ENCODE measurements at regions of chr1 and their contacts with region 1.

Region 1: GRCh38 chr1:10430216-10431069 is at the start of gene CENPS:
- DNase-seq: peak; percentile 97
- H3K4me3 Mint-ChIP-seq: peak within 1 kb of the TSS; percentile 95
- H3K27ac Mint-ChIP-seq: peak within 1 kb of the TSS; percentile 98
- H3K4me1 Mint-ChIP-seq: peaks cover 18% of the 10 kb centered on the region
- H3K27me3 Mint-ChIP-seq: no peaks in the 10 kb centered on the region
- total RNA-seq, gene CENPS: 18.8 and 25.1 TPM in 2 replicates

Region 2: DNA sequence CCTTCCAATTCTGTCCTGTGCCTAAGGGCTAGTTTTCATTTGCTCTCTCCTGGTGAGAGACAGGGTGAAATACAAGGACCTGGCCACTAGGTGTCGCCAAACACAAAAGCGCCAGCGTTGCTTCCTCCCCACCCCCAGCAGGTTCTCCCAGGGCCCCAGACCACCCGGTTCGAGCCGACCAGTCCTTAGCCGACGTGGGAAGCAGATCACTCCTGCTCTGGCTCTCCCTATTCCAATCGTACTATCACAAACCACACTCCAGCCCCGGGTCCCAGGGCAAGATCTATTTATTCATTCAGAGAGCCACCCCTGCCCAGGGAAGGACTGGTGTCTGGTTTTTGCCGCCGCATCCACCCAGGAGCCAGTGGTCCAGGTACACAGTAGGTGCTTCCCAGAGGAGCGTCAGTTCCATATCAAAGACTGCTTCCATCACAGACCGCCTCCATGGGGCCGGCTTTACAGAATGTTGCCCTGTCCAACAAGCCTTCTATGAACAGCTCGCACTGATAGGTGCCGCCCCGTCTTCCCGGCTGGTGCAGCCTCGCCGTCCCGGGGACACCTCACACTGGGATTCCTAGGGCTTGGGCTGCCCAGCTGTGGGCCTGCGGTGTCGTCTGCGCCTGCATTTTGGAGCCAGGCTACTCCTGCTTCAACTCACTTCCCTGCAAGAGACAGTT is 555.3 kb before region 1 on chr1:
- intact Hi-C with region 1: loop called (anchors 1 kb)
- DNase-seq: peak; percentile 91
- H3K4me3 Mint-ChIP-seq: no peak overlapping the region
- H3K27ac Mint-ChIP-seq: no peak overlapping the region
- H3K4me1 Mint-ChIP-seq: peaks cover 4% of the 10 kb centered on the region
- H3K27me3 Mint-ChIP-seq: no peaks in the 10 kb centered on the region

Region 3: DNA sequence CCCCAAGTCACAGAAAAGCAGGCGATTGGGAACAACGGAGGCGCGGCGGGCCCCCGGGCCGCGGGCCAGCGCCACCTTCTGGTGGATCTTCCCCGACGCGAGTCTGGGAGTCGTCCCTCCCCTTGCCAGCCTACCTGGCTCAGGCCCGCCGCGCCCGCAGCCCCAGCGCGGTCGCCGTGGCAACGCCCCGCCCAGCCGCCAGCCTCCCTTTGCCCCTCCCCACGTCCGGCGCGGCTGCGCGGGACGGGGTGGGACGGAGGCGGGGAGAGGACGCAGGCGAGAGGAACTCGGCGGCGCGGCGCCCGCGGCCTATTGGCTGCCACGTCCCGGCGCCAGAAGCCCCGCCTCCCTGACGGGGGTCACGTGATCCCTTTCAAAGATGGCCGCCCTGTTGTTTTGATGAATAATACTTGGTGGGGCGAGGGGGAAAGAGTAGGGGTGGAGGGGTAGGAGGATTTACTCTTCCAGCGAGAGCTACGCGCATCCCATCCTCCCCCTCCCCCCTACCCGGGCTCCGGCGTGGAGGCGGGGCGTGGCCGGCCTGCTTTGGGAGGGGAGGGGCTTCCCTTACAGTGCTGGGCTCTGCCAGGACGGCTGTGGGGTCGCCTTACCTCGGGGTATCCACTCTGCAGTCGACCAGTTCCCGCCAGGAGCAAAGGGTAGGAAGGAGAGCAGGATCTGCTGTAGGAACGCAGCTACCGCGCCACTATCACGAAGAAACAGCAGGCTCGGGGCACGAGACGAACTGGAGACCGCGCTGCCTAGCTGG is 397.7 kb before region 1 on chr1 and contains the start of gene UBE4B:
- intact Hi-C with region 1: loop called (anchors 1 kb)
- DNase-seq: peak; percentile 100
- H3K4me3 Mint-ChIP-seq: peak within 1 kb of the TSS; percentile 85
- H3K27ac Mint-ChIP-seq: peak within 1 kb of the TSS; percentile 97
- H3K4me1 Mint-ChIP-seq: peaks cover 20% of the 10 kb centered on the region
- H3K27me3 Mint-ChIP-seq: no peaks in the 10 kb centered on the region
- total RNA-seq, gene UBE4B: 29.9 and 31.1 TPM in 2 replicates

Region 4: GRCh38 chr1:10378081-10378841 is 52.2 kb before region 1 on chr1:
- intact Hi-C with region 1: loop called (anchors 1 kb)
- DNase-seq: no peak
- H3K4me3 Mint-ChIP-seq: no peak overlapping the region
- H3K27ac Mint-ChIP-seq: no peak overlapping the region
- H3K4me1 Mint-ChIP-seq: no peaks in the 10 kb centered on the region
- H3K27me3 Mint-ChIP-seq: no peaks in the 10 kb centered on the region

Region 5: GRCh38 chr1:10472220-10473144 is 42.0 kb after region 1 on chr1 and contains the start of gene DFFA:
- intact Hi-C with region 1: loop called (anchors 1 kb)
- DNase-seq: peak; percentile 98
- H3K4me3 Mint-ChIP-seq: peak within 1 kb of the TSS; percentile 98
- H3K27ac Mint-ChIP-seq: peak within 1 kb of the TSS; percentile 94
- H3K4me1 Mint-ChIP-seq: peaks cover 30% of the 10 kb centered on the region
- H3K27me3 Mint-ChIP-seq: no peaks in the 10 kb centered on the region
- total RNA-seq, gene DFFA: 57.4 and 58.2 TPM in 2 replicates

Region 6: DNA sequence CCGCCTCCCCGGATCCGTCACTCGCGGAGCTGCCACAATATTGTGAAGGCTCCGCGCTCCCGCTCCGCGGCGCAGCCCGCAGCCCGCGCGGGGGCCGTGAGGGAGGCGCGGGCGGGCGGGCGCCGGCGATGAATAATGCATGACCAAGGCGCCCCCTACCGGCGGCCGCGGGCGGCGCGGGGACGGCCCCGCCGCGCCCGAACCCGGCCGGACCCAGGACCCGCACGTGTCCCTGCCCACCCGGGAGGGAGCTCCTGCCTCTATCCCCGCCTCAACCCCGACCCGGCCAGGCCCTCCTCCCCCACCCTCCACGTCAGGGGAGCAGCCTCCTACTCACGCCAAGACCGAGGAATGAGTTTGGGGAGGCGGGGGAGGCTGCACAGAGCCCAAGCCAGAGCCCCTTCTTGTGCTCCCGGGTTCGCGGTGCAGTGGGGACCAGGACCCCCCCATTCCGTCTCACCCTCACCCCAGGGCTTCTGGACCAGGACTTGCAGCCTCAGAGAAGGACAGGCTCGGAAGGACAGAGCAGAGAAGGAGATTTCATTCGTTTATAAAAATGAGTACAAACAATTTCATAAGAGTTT is 436.8 kb after region 1 on chr1:
- intact Hi-C with region 1: loop called (anchors 5 kb)
- DNase-seq: peak; percentile 90
- H3K4me3 Mint-ChIP-seq: peak overlapping the region; percentile 41
- H3K27ac Mint-ChIP-seq: no peak overlapping the region
- H3K4me1 Mint-ChIP-seq: peaks cover 14% of the 10 kb centered on the region
- H3K27me3 Mint-ChIP-seq: peaks cover 65% of the 10 kb centered on the region

Region 7: GRCh38 chr1:11062965-11063401 is 632.5 kb after region 1 on chr1:
- intact Hi-C with region 1: no loop called
- DNase-seq: peak; percentile 77
- H3K4me3 Mint-ChIP-seq: peak overlapping the region; percentile 51
- H3K27ac Mint-ChIP-seq: peak overlapping the region; percentile 62
- H3K4me1 Mint-ChIP-seq: peaks cover 27% of the 10 kb centered on the region
- H3K27me3 Mint-ChIP-seq: no peaks in the 10 kb centered on the region

Measured in activated CD4-positive, alpha-beta T cell treated with anti-CD3 and anti-CD28 coated beads, Interleukin-2, amount 10 ng/mL, durations not matched to agents 24 days and 14 days (primary cell).